Caco-2 (cell line): ENCODE measurements at regions of chr11 and their contacts with region 1.

Region 1: GRCh38 chr11:12888525-12889158 is 120.5 kb upstream of the RASSF10 start:
- DNase-seq: peak; percentile 77 to 82
- H3K4me3 ChIP-seq: no peak overlapping the region
- H3K4me3 Mint-ChIP-seq: no peak overlapping the region
- H3K27ac Mint-ChIP-seq: peak overlapping the region; percentile 27
- H3K4me1 ChIP-seq: peaks cover 6% of the 10 kb centered on the region
- H3K4me1 Mint-ChIP-seq: peaks cover 10% of the 10 kb centered on the region
- H3K27me3 ChIP-seq: no peaks in the 10 kb centered on the region
- H3K27me3 Mint-ChIP-seq: no peaks in the 10 kb centered on the region
- CTCF ChIP-seq: peak; percentile 62 to 78

Region 2: DNA sequence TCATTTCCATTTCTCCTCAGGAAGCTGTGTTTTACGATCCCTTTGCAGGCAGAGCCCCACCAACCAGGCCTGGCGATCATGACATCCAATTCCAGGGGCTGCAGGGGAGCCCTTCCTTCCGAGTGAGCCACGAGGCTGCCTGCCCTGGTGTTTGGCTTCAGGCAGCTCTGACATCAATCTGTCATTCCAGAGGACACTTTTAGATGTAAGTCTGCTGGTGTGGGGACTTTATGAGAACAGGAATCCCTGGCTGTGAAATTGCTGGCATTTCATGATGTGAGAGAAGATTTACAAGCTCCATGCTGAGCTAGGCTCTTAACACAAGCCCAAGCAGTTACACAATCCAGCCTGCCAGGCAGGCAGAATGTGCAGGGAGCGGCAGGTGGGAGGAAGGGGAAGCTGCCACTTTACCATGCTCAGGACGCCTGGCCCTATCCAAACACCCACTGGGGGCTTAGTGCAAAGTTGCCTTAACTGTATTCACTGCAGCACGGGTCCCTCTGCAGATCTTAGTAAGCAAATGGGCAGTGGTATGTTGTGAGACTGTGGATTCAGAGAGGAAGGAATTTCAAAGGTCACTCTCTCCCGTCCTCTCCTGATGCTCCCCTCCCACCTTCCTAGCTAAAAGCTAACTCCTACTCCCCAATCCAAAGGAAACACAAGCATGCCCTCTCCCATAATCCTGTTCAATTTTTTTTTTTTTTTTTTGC is 821.7 kb before region 1 on chr11:
- CTCF ChIA-PET with region 1: no interaction called
- POLR2A ChIA-PET with region 1: no interaction called
- intact Hi-C with region 1: no loop called
- DNase-seq: peak; percentile 76 to 81
- H3K4me3 ChIP-seq: no peak overlapping the region
- H3K4me3 Mint-ChIP-seq: peak overlapping the region; percentile 60
- H3K27ac Mint-ChIP-seq: peak overlapping the region; percentile 94
- H3K4me1 ChIP-seq: peaks cover 63% of the 10 kb centered on the region
- H3K4me1 Mint-ChIP-seq: peaks cover 38% of the 10 kb centered on the region
- H3K27me3 ChIP-seq: no peaks in the 10 kb centered on the region
- H3K27me3 Mint-ChIP-seq: no peaks in the 10 kb centered on the region
- CTCF ChIP-seq: no peak

Region 3: DNA sequence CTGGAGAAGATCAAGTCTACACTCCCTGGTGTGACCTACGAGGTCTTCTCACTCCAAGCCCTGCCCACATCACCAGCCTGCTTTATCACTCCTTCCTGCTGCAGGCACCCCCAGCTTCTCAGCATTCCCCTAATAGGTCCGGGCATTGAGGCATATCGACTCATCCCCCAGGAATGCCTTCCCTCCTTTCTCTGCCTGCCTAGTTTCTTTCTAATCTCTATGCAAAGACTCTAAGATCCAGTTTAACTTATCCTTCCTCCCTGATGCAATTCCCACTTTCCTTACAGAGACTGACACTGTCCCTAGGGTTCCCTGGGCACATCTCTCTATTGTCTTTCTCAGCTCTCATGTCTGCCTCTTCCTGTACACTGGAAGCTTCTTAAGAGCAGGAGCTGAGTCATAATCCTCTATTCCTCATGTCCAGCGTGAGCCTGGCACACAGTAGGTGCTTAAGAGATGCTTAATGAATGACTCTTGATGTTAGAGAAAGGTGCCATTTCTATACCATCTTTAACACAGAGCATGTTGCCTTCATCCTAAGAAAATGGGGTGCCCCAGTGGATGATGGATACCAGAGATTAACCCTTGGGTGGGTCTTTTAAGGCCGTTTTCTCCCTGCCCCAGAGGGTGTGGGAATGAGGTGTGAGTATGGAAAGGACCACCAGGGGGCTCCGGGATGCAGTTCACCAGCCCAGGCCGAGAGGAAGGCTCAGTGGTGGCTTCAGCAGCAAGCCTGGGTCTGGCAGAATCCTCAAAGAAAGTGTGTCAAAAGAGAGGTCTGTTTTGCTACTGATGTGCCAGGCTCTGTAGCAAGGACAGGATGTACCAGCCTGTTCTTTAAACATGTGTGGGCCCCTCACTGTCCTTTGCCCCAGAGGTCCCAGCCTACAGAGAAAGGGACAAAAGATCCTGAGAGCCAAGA is 476.6 kb before region 1 on chr11:
- CTCF ChIA-PET with region 1: interaction called, 4 read pairs
- POLR2A ChIA-PET with region 1: no interaction called
- intact Hi-C with region 1: loop called (anchors 2 kb)
- DNase-seq: peak; percentile 79 to 86
- H3K4me3 ChIP-seq: no peak overlapping the region
- H3K4me3 Mint-ChIP-seq: peak overlapping the region; percentile 39
- H3K27ac Mint-ChIP-seq: peak overlapping the region; percentile 71
- H3K4me1 ChIP-seq: peaks cover 18% of the 10 kb centered on the region
- H3K4me1 Mint-ChIP-seq: peaks cover 22% of the 10 kb centered on the region
- H3K27me3 ChIP-seq: no peaks in the 10 kb centered on the region
- H3K27me3 Mint-ChIP-seq: no peaks in the 10 kb centered on the region
- CTCF ChIP-seq: peak; percentile 85 to 92

Region 4: GRCh38 chr11:12673924-12674570 is 214.6 kb before region 1 on chr11 and contains the start of gene TEAD1:
- CTCF ChIA-PET with region 1: interaction called, 6 read pairs
- POLR2A ChIA-PET with region 1: no interaction called
- intact Hi-C with region 1: loop called (anchors 1 kb)
- DNase-seq: peak; percentile 97 to 100
- H3K4me3 ChIP-seq: peak within 1 kb of the TSS; percentile 81
- H3K4me3 Mint-ChIP-seq: peak within 1 kb of the TSS; percentile 79
- H3K27ac Mint-ChIP-seq: peak within 1 kb of the TSS; percentile 91
- H3K4me1 ChIP-seq: peaks cover 20% of the 10 kb centered on the region; the same call in 1 of the 2 replicates
- H3K4me1 Mint-ChIP-seq: peaks cover 32% of the 10 kb centered on the region
- H3K27me3 ChIP-seq: no peaks in the 10 kb centered on the region
- H3K27me3 Mint-ChIP-seq: no peaks in the 10 kb centered on the region
- CTCF ChIP-seq: no peak
- total RNA-seq, gene TEAD1: 134 and 144 TPM in 2 replicates

Region 5: GRCh38 chr11:12724301-12725046 is 164.2 kb before region 1 on chr11:
- CTCF ChIA-PET with region 1: interaction called, 4 read pairs
- POLR2A ChIA-PET with region 1: no interaction called
- intact Hi-C with region 1: loop called (anchors 2 kb)
- DNase-seq: peak; percentile 36 to 61
- H3K4me3 ChIP-seq: no peak overlapping the region
- H3K4me3 Mint-ChIP-seq: peak overlapping the region; percentile 78
- H3K27ac Mint-ChIP-seq: peak overlapping the region; percentile 96
- H3K4me1 ChIP-seq: peaks cover 76% of the 10 kb centered on the region
- H3K4me1 Mint-ChIP-seq: peaks cover 82% of the 10 kb centered on the region
- H3K27me3 ChIP-seq: no peaks in the 10 kb centered on the region
- H3K27me3 Mint-ChIP-seq: no peaks in the 10 kb centered on the region
- CTCF ChIP-seq: no peak

Region 6: GRCh38 chr11:12813371-12814225 is 75.0 kb before region 1 on chr11:
- CTCF ChIA-PET with region 1: interaction called, 4 read pairs
- POLR2A ChIA-PET with region 1: interaction called, 5 read pairs
- intact Hi-C with region 1: loop called (anchors 2 kb)
- DNase-seq: no peak
- H3K4me3 ChIP-seq: no peak overlapping the region
- H3K4me3 Mint-ChIP-seq: peak overlapping the region; percentile 60
- H3K27ac Mint-ChIP-seq: peak overlapping the region; percentile 88
- H3K4me1 ChIP-seq: peaks cover 70% of the 10 kb centered on the region
- H3K4me1 Mint-ChIP-seq: peaks cover 48% of the 10 kb centered on the region
- H3K27me3 ChIP-seq: no peaks in the 10 kb centered on the region
- H3K27me3 Mint-ChIP-seq: no peaks in the 10 kb centered on the region
- CTCF ChIP-seq: no peak

Region 7: GRCh38 chr11:12827929-12828812 is 60.5 kb before region 1 on chr11:
- CTCF ChIA-PET with region 1: interaction called, 25 read pairs
- POLR2A ChIA-PET with region 1: no interaction called
- intact Hi-C with region 1: loop called (anchors 5 kb)
- DNase-seq: peak; percentile 53 to 66
- H3K4me3 ChIP-seq: peak overlapping the region; percentile 39
- H3K4me3 Mint-ChIP-seq: peak overlapping the region; percentile 90
- H3K27ac Mint-ChIP-seq: peak overlapping the region; percentile 93
- H3K4me1 ChIP-seq: peaks cover 40% of the 10 kb centered on the region
- H3K4me1 Mint-ChIP-seq: peaks cover 53% of the 10 kb centered on the region
- H3K27me3 ChIP-seq: no peaks in the 10 kb centered on the region
- H3K27me3 Mint-ChIP-seq: no peaks in the 10 kb centered on the region
- CTCF ChIP-seq: peak in 1 of 2 experiments; percentile 3

Region 8: GRCh38 chr11:12868315-12869073 is 20.1 kb before region 1 on chr11:
- CTCF ChIA-PET with region 1: no interaction called
- POLR2A ChIA-PET with region 1: no interaction called
- intact Hi-C with region 1: no loop called
- DNase-seq: no peak
- H3K4me3 ChIP-seq: no peak overlapping the region
- H3K4me3 Mint-ChIP-seq: no peak overlapping the region
- H3K27ac Mint-ChIP-seq: no peak overlapping the region
- H3K4me1 ChIP-seq: no peaks in the 10 kb centered on the region
- H3K4me1 Mint-ChIP-seq: no peaks in the 10 kb centered on the region
- H3K27me3 ChIP-seq: no peaks in the 10 kb centered on the region
- H3K27me3 Mint-ChIP-seq: no peaks in the 10 kb centered on the region
- CTCF ChIP-seq: peak in 1 of 2 experiments; percentile 21

Region 9: GRCh38 chr11:13189561-13190426 is 301.2 kb after region 1 on chr11:
- CTCF ChIA-PET with region 1: no interaction called
- POLR2A ChIA-PET with region 1: no interaction called
- intact Hi-C with region 1: no loop called
- DNase-seq: no peak
- H3K4me3 ChIP-seq: no peak overlapping the region
- H3K4me3 Mint-ChIP-seq: no peak overlapping the region
- H3K27ac Mint-ChIP-seq: no peak overlapping the region
- H3K4me1 ChIP-seq: no peaks in the 10 kb centered on the region
- H3K4me1 Mint-ChIP-seq: no peaks in the 10 kb centered on the region
- H3K27me3 ChIP-seq: no peaks in the 10 kb centered on the region
- H3K27me3 Mint-ChIP-seq: peaks cover 2% of the 10 kb centered on the region
- CTCF ChIP-seq: no peak